CD4-positive, alpha-beta memory T cell (primary cell): ENCODE measurements at regions of chr9 and their contacts with region 1.

Region 1: DNA sequence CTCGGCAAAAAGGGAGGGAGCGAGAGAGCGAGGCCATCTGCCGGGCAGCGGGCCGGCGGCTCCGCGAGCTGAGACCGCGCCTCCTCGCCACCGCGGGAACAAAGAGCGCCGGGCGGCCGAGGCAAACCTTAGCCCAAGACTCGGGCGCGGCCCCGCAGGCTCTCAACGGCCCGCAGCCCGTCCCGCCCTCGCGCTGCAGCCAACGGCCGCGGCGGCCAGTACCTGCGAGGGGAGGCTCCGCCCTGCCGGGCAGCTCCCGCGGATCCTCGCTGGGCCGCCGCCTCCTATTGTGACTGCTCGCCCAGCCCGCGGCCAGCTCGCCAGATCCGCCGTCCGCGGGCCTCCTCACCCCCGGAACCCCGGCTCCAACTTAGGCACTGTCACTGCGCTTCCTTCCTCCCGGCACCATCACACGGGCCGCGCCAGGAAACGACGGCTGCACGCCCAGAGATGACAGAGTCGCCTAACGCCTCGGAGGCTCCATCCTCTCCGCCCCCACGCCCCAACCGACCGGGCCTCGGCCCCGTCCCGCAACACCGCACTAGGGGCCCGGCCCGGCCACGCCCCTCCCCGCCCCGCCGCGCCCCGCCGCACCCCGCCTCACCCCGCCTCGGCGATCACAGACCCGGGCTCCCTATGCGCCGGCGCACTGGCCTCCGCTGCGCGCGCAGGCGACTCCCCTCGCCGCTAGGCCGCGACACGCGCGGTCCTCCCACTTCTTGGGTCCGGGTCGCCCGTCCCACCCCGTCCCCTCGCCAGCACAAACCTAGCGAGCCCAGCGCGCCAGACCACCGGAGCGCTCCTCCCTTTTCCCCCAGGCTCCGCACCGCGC is 479 bp upstream of the RNF38 start:
- DNase-seq: peak; percentile 89 to 93 (median 90)
- H3K4me3 ChIP-seq: peak overlapping the region; percentile 65 to 77
- H3K4me3 Mint-ChIP-seq: peak overlapping the region; percentile 92 to 97 (median 94)
- H3K27ac ChIP-seq: peak overlapping the region; percentile 97
- H3K27ac Mint-ChIP-seq: peak overlapping the region; percentile 92 to 100 (median 98)
- H3K4me1 ChIP-seq: peaks cover 45% of the 10 kb centered on the region
- H3K4me1 Mint-ChIP-seq: peaks cover 30 to 58% (median 44%) of the 10 kb centered on the region in 4 donors
- H3K27me3 ChIP-seq: no peaks in the 10 kb centered on the region
- H3K27me3 Mint-ChIP-seq: no peaks in the 10 kb centered on the region

Region 2: GRCh38 chr9:36258208-36258988 is 142.2 kb before region 1 on chr9 and contains the start of gene GNE:
- CTCF ChIA-PET with region 1: no interaction called
- POLR2A ChIA-PET with region 1: interaction called, 3 read pairs
- intact Hi-C with region 1: loop called (anchors 1 kb)
- DNase-seq: peak; percentile 95 to 98 (median 96)
- H3K4me3 ChIP-seq: peak within 1 kb of the TSS; percentile 62 to 96
- H3K4me3 Mint-ChIP-seq: peak within 1 kb of the TSS; percentile 96 to 100 (median 97)
- H3K27ac ChIP-seq: peak within 1 kb of the TSS; percentile 85
- H3K27ac Mint-ChIP-seq: peak within 1 kb of the TSS; percentile 96 to 99 (median 98)
- H3K4me1 ChIP-seq: peaks cover 16% of the 10 kb centered on the region
- H3K4me1 Mint-ChIP-seq: peaks cover 7 to 19% (median 11%) of the 10 kb centered on the region in 4 donors
- H3K27me3 ChIP-seq: no peaks in the 10 kb centered on the region
- H3K27me3 Mint-ChIP-seq: no peaks in the 10 kb centered on the region
- total RNA-seq, gene GNE: 16.9 to 18.1 TPM

Region 3: DNA sequence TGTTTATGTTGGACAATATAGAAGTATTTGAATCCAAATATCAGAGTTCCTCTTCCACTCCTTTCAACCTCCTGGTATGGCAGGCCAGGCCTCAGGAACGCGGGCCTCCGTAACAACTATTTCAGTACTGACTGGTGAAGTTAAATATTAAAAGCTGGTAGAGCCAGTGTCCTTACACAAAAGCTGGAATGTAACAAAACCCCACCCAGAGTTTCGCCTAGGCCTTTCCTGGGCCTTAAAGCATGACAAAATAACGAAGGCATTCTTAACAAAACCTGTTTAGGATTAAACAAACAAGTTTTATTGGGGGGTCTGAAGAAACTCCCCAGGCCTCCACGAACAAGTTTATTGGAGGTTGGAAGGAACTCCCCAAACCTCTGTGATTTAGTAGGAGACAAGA is 80.7 kb before region 1 on chr9:
- CTCF ChIA-PET with region 1: no interaction called
- POLR2A ChIA-PET with region 1: no interaction called
- intact Hi-C with region 1: no loop called
- DNase-seq: no peak
- H3K4me3 ChIP-seq: no peak overlapping the region
- H3K4me3 Mint-ChIP-seq: no peak overlapping the region
- H3K27ac ChIP-seq: no peak overlapping the region
- H3K27ac Mint-ChIP-seq: no peak overlapping the region
- H3K4me1 ChIP-seq: no peaks in the 10 kb centered on the region
- H3K4me1 Mint-ChIP-seq: peaks cover 0 to 4% (median under 1%) of the 10 kb centered on the region in 4 donors
- H3K27me3 ChIP-seq: no peaks in the 10 kb centered on the region
- H3K27me3 Mint-ChIP-seq: peaks cover 0 to 3% of the 10 kb centered on the region in 2 donors

Region 4: DNA sequence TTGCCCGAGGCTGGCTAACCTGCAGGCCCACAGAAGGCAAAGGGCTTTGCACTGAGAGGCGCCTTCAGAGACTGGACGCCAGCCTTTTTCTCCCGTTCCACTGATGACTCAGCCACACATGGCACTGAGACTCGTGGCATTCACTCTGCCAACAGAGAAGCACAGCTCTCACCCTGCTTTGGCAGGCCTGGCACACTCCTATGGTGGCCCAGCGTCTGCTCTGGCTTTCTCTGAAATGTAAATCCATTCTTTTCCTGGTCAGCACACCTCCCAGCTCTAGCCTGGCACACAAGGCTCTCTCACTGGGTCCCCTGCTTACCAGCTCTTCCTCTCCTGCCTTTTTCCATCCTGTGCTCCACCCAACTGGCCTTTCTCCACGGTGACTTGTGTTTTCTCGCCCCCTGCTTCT is 166.3 kb after region 1 on chr9:
- CTCF ChIA-PET with region 1: interaction called, 505 read pairs
- POLR2A ChIA-PET with region 1: interaction called, 4 read pairs
- intact Hi-C with region 1: loop called (anchors 5 kb)
- DNase-seq: no peak
- H3K4me3 ChIP-seq: no peak overlapping the region
- H3K4me3 Mint-ChIP-seq: no peak overlapping the region
- H3K27ac ChIP-seq: no peak overlapping the region
- H3K27ac Mint-ChIP-seq: no peak overlapping the region
- H3K4me1 ChIP-seq: no peaks in the 10 kb centered on the region
- H3K4me1 Mint-ChIP-seq: peaks cover 0 to 3% (median under 1%) of the 10 kb centered on the region in 4 donors
- H3K27me3 ChIP-seq: no peaks in the 10 kb centered on the region
- H3K27me3 Mint-ChIP-seq: peaks cover 0 to 3% of the 10 kb centered on the region in 2 donors

Region 5: GRCh38 chr9:36572515-36573418 is 172.2 kb after region 1 on chr9 and contains the start of gene MELK:
- CTCF ChIA-PET with region 1: no interaction called
- POLR2A ChIA-PET with region 1: interaction called, 4 read pairs
- intact Hi-C with region 1: loop called (anchors 5 kb)
- DNase-seq: peak; percentile 76 to 86 (median 81)
- H3K4me3 ChIP-seq: peak within 1 kb of the TSS; percentile 76 to 95
- H3K4me3 Mint-ChIP-seq: peak within 1 kb of the TSS; percentile 90 to 95 (median 92)
- H3K27ac ChIP-seq: peak within 1 kb of the TSS; percentile 70
- H3K27ac Mint-ChIP-seq: peak within 1 kb of the TSS; percentile 77 to 90 (median 89)
- H3K4me1 ChIP-seq: peaks cover 20% of the 10 kb centered on the region
- H3K4me1 Mint-ChIP-seq: peaks cover 15 to 32% (median 25%) of the 10 kb centered on the region in 4 donors
- H3K27me3 ChIP-seq: no peaks in the 10 kb centered on the region
- H3K27me3 Mint-ChIP-seq: no peaks in the 10 kb centered on the region
- total RNA-seq, gene MELK: 0.19 to 0.38 TPM

Region 6: DNA sequence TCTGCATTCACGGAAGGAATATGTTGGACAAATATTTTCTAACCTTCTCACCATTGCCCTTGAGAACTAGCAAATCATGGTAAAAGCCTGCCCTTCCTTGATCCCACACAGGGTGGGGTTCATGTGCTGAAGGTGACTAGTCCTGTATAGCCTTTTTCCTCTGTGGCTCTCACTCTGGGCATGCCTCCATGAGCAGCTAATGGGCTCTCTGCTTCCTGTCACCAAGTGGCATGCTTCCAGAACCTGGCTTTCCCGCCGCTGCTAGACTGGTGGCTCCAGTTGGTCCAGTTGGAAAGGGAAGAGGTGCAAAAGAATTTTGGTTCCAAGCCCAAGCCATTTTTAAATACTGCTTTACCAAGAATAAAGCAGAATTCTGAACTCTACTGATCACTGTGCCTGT is 1140.1 kb after region 1 on chr9:
- CTCF ChIA-PET with region 1: no interaction called
- POLR2A ChIA-PET with region 1: no interaction called
- intact Hi-C with region 1: no loop called
- DNase-seq: no peak
- H3K4me3 ChIP-seq: no peak overlapping the region
- H3K4me3 Mint-ChIP-seq: no peak overlapping the region
- H3K27ac ChIP-seq: no peak overlapping the region
- H3K27ac Mint-ChIP-seq: no peak overlapping the region
- H3K4me1 ChIP-seq: no peaks in the 10 kb centered on the region
- H3K4me1 Mint-ChIP-seq: no peaks in the 10 kb centered on the region
- H3K27me3 ChIP-seq: no peaks in the 10 kb centered on the region
- H3K27me3 Mint-ChIP-seq: no peaks in the 10 kb centered on the region